Sigmoid colon (tissue), 7 donors: ENCODE measurements at regions of chr2 and their contacts with region 1.

Region 1: GRCh38 chr2:215711471-215712034 is 275.7 kb upstream of the FN1 start:
- DNase-seq: no peak
- H3K4me3 ChIP-seq: no peak overlapping the region
- H3K27ac ChIP-seq: peak overlapping the region; percentile 66 to 81 (median 76)
- H3K4me1 ChIP-seq: peaks cover 0 to 41% (median 35%) of the 10 kb centered on the region in 4 donors
- H3K27me3 ChIP-seq: no peaks in the 10 kb centered on the region
- CTCF ChIP-seq: no peak
- EP300 ChIP-seq: no peak
- POLR2A ChIP-seq: no peak

Region 2: DNA sequence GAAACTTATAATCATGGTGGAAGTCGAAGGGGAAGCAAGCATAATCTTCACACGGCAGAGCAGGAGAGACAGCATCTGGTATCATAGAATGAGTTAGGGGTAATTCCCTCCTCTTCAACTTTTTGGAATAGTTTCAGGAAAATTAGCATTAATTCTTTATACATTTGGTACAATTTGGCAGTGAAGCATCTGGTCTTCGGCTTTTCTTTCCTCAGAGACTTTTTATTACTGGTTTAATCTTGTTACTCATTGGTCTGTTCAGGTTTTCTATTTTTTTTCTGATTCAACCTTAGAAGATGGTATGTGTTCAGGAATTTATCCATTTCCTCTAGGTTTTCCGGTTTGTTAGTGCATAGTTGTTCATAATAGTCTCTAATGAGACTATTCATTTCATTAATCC is 533.4 kb before region 1 on chr2:
- intact Hi-C with region 1: no loop called
- DNase-seq: no peak
- H3K4me3 ChIP-seq: no peak overlapping the region
- H3K27ac ChIP-seq: no peak overlapping the region
- H3K4me1 ChIP-seq: no peaks in the 10 kb centered on the region
- H3K27me3 ChIP-seq: no peaks in the 10 kb centered on the region
- CTCF ChIP-seq: no peak
- EP300 ChIP-seq: no peak
- POLR2A ChIP-seq: no peak

Region 3: GRCh38 chr2:215664847-215665525 is 46.6 kb before region 1 on chr2:
- intact Hi-C with region 1: loop called (anchors 5 kb)
- DNase-seq: no peak
- H3K4me3 ChIP-seq: no peak overlapping the region
- H3K27ac ChIP-seq: peak overlapping the region; percentile 45 to 80 (median 68)
- H3K4me1 ChIP-seq: peaks cover 0 to 71% (median 43%) of the 10 kb centered on the region in 4 donors
- H3K27me3 ChIP-seq: no peaks in the 10 kb centered on the region
- CTCF ChIP-seq: no peak
- EP300 ChIP-seq: no peak
- POLR2A ChIP-seq: no peak

Region 4: DNA sequence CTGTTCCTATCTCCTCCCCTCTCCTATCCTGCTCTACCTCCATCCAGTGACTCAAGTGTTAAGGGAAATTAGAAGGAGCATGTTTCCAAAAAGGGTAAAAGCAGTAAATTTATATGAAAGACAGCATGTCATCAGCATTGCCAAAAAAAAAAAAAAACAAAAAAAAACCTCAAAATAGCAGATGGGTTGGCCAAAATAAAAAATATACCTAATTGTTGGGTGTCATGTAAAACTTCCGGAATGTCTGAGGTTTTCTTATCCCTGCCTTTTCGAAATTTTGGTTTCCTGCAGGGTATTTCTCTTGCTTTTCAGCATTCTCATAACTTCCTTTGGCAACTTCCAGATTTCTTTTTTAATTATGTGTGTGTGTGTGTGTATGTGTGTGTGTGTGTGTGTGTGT is 34.1 kb before region 1 on chr2:
- intact Hi-C with region 1: no loop called
- DNase-seq: no peak
- H3K4me3 ChIP-seq: no peak overlapping the region
- H3K27ac ChIP-seq: no peak overlapping the region
- H3K4me1 ChIP-seq: peaks cover 0 to 4% (median 0%) of the 10 kb centered on the region in 4 donors
- H3K27me3 ChIP-seq: no peaks in the 10 kb centered on the region
- CTCF ChIP-seq: no peak
- EP300 ChIP-seq: no peak
- POLR2A ChIP-seq: no peak

Region 5: DNA sequence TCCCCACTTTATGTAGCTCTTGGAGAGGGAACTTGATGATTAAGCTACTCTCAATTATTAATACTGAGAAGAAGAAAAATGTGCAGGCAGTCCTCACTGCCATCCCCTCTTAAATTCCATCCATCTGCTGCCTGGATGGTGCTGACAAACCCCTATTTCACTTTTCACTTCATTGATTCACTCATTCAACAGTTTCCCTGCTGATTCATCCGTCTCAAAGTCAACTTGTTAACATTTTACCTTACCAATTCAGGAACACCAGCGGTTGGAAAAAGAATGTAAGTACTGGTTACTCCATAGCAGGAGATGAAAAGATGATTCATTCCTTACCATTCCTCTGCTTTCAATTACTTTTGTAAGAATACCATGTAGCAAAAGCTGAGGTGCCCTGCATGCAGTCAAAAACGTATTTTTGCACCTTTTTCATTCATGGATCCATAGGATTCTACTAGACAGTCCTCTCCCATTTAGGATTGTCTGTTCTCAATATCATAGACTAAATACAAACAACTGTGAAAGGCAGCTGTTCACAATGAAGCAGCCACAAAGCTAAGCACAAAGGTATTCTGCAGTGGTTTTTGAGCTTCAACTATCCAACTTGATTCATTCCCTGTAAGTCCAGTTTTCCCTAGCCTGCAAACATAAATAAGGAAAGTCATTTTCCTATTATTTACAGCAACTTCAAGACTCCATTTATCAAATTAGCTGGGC is 39.8 kb after region 1 on chr2:
- intact Hi-C with region 1: no loop called
- DNase-seq: no peak
- H3K4me3 ChIP-seq: no peak overlapping the region
- H3K27ac ChIP-seq: peak overlapping the region in 3 of 4 donors; percentile 49 to 64 (median 58)
- H3K4me1 ChIP-seq: peaks cover 0 to 66% (median 45%) of the 10 kb centered on the region in 4 donors
- H3K27me3 ChIP-seq: no peaks in the 10 kb centered on the region
- CTCF ChIP-seq: no peak
- EP300 ChIP-seq: no peak
- POLR2A ChIP-seq: no peak

Region 6: GRCh38 chr2:215775106-215775505 is 63.6 kb after region 1 on chr2:
- intact Hi-C with region 1: loop called (anchors 5 kb)
- DNase-seq: no peak
- H3K4me3 ChIP-seq: no peak overlapping the region
- H3K27ac ChIP-seq: peak overlapping the region in 1 of 4 donors; percentile 70
- H3K4me1 ChIP-seq: peaks cover 0 to 57% (median 44%) of the 10 kb centered on the region in 4 donors
- H3K27me3 ChIP-seq: no peaks in the 10 kb centered on the region
- CTCF ChIP-seq: no peak
- EP300 ChIP-seq: no peak
- POLR2A ChIP-seq: no peak

Region 7: DNA sequence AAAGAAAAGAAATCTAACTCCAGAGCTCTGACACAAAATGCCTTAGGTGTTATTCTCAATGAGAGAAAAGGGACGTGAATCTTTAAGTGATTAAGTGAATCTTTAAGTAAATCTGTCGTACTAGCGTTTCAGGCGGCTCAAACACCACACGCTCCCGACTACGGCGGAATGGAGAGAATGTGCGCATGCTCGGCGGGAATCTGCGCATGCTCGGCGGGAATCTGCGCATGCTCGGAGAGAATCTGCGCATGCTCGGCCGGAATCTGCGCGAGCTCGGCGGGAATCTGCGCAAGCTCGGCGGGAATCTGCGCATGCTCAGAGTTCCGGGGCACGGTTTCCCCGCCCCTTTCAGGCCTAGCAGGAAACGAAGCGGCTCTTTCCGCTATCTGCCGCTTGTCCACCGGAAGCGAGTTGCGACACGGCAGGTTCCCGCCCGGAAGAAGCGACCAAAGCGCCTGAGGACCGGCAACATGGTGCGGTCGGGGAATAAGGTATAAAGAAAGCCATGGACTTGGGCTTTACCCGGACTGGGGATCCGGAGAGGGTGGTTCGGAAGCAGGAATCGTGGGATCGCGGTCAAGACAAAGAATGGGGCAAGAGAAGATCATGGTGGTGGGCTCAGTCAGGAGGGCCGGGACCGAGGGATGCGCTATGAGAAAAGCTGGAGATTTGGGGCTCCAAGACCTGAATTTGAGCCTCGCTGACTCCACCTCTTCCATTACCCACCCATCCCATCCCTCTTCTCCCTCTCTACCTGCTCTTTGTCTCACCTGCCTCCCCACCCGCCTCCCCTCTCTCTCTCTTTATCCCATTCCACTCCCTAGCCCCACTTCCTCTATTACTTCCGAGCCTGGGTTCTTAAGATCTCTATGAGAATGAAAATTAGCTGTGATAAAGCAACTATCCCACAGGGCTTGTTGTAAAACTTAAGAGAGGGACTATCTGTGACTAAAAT is 397.7 kb after region 1 on chr2 and contains the start of gene XRCC5:
- intact Hi-C with region 1: no loop called
- DNase-seq: peak; percentile 98
- H3K4me3 ChIP-seq: peak within 1 kb of the TSS; percentile 68 to 93 (median 88)
- H3K27ac ChIP-seq: peak within 1 kb of the TSS; percentile 90 to 95 (median 92)
- H3K4me1 ChIP-seq: peaks cover 0 to 28% (median 23%) of the 10 kb centered on the region in 4 donors
- H3K27me3 ChIP-seq: no peaks in the 10 kb centered on the region
- CTCF ChIP-seq: no peak
- EP300 ChIP-seq: no peak
- POLR2A ChIP-seq: peak in 1 of 2 donors; percentile 48
- total RNA-seq, gene XRCC5: 92.5 to 152 (median 137) TPM